Right cardiac atrium (tissue), 5 donors: ENCODE measurements at regions of chr4 and their contacts with region 1.

Region 1: GRCh38 chr4:73152893-73153292 is 83.4 kb upstream of the COX18 start:
- DNase-seq: no peak
- ATAC-seq: no peak
- H3K4me3 ChIP-seq: no peak overlapping the region
- H3K27ac ChIP-seq: no peak overlapping the region
- H3K4me1 ChIP-seq: no peaks in the 10 kb centered on the region
- H3K27me3 ChIP-seq: no peaks in the 10 kb centered on the region

Region 2: GRCh38 chr4:73036123-73036522 is 116.8 kb before region 1 on chr4:
- intact Hi-C with region 1: no loop called
- DNase-seq: no peak
- ATAC-seq: no peak
- H3K4me3 ChIP-seq: no peak overlapping the region
- H3K27ac ChIP-seq: no peak overlapping the region
- H3K4me1 ChIP-seq: no peaks in the 10 kb centered on the region
- H3K27me3 ChIP-seq: no peaks in the 10 kb centered on the region

Region 3: GRCh38 chr4:73103799-73104503 is 48.9 kb before region 1 on chr4:
- intact Hi-C with region 1: loop called in 1 of 4 experiments (anchors 10 kb)
- DNase-seq: no peak
- ATAC-seq: no peak
- H3K4me3 ChIP-seq: no peak overlapping the region
- H3K27ac ChIP-seq: no peak overlapping the region
- H3K4me1 ChIP-seq: no peaks in the 10 kb centered on the region
- H3K27me3 ChIP-seq: no peaks in the 10 kb centered on the region